Activated CD4-positive, alpha-beta memory T cell treated with anti-CD3 and anti-CD28 coated beads for 36 hours (primary cell): ENCODE measurements at regions of chr11 and their contacts with region 1.

Region 1: DNA sequence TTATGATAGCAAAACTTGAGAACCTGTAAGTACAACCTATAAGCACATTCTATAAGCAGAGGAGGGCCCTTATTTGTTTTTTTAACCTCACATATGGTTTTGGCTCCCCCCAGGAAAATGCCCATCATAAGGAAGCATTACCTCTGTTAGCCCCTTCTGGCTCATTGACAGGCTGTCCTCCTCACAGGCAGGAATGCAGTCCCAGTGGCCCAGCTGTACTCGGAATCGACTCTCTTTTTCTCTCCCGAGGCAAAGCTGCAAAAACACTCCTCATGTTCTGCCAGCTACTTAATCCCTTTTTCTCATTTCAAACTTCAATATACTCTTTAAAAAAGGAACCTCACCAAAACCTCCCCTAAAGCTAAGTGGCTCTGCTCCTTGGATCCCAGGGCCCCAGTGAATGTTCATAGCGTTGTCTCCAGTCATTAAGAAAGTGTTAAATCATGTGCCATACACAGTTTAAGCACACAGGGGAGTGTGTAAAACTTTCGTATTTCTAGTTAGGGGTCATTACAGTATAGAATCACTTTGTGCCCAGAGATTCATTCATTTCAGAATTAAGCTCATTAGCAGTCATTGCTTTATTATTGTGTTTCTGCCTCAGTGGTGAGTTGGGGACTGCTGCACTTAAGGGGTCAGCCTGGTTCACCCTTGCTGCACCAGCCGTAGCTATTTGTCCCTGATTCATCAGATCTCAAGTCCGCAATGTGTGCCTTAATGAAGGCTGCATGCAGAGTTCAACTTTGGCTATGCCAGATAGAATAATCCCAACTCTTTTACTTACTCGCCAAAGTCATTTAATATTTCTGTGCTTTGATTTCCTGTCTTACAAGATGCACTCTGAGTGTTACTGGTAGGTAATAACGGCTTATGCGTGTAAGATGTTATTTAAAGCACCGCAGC is 57.6 kb downstream of the JRKL start:
- DNase-seq: no peak
- H3K4me3 Mint-ChIP-seq: no peak overlapping the region
- H3K27ac Mint-ChIP-seq: no peak overlapping the region
- H3K4me1 Mint-ChIP-seq: no peaks in the 10 kb centered on the region
- H3K27me3 Mint-ChIP-seq: peaks cover 8% of the 10 kb centered on the region

Region 2: GRCh38 chr11:96459751-96460150 is 12.3 kb after region 1 on chr11:
- CTCF ChIA-PET with region 1: interaction called, 10 read pairs
- POLR2A ChIA-PET with region 1: interaction called, 5 read pairs
- intact Hi-C with region 1: no loop called
- DNase-seq: no peak
- H3K4me3 Mint-ChIP-seq: no peak overlapping the region
- H3K27ac Mint-ChIP-seq: no peak overlapping the region
- H3K4me1 Mint-ChIP-seq: peaks cover 9% of the 10 kb centered on the region
- H3K27me3 Mint-ChIP-seq: peaks cover 14% of the 10 kb centered on the region

Region 3: GRCh38 chr11:96704847-96705246 is 257.4 kb after region 1 on chr11:
- CTCF ChIA-PET with region 1: no interaction called
- POLR2A ChIA-PET with region 1: no interaction called
- intact Hi-C with region 1: no loop called
- DNase-seq: no peak
- H3K4me3 Mint-ChIP-seq: no peak overlapping the region
- H3K27ac Mint-ChIP-seq: no peak overlapping the region
- H3K4me1 Mint-ChIP-seq: no peaks in the 10 kb centered on the region
- H3K27me3 Mint-ChIP-seq: no peaks in the 10 kb centered on the region